ENCODE measurements at regions of chr1 and their contacts with region 1.

Region 1: GRCh38 chr1:229258031-229258756 is 12.7 kb upstream of the RAB4A start:
- DNase-seq: peak; percentile 74
- ATAC-seq: no peak
- H3K4me3 Mint-ChIP-seq: no peak overlapping the region
- H3K27ac Mint-ChIP-seq: no peak overlapping the region
- H3K4me1 Mint-ChIP-seq: peaks cover 32% of the 10 kb centered on the region
- H3K27me3 Mint-ChIP-seq: no peaks in the 10 kb centered on the region

Region 2: GRCh38 chr1:228691926-228692325 is 566.3 kb before region 1 on chr1:
- CTCF ChIA-PET with region 1: interaction called, 3 read pairs
- POLR2A ChIA-PET with region 1: no interaction called
- intact Hi-C with region 1: loop called in 1 of 2 experiments (anchors 1 kb)
- DNase-seq: peak; percentile 30
- ATAC-seq: no peak
- H3K4me3 Mint-ChIP-seq: no peak overlapping the region
- H3K27ac Mint-ChIP-seq: no peak overlapping the region
- H3K4me1 Mint-ChIP-seq: peaks cover 10% of the 10 kb centered on the region
- H3K27me3 Mint-ChIP-seq: no peaks in the 10 kb centered on the region

Region 3: DNA sequence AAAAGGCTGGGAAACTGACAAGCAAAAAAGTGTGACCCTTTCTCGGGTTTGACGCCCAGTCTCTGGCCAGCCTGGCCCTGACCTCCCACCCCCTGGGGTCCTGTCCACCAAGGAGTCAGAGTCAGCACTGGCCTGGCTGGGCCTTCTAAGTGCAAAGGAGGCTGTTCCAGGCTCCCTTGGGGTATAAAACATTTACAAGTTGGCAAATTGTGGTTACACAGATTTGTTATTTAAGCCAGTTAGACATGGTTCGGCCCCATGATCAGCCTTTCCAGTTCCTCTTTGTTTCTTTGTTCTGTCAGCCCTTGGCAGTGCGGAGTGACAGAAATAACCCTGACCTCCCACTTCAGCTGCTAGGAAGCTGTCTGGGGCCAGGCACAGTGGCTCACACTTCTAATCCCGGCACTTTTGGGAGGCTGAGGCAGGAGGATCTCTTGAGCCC is 148.9 kb before region 1 on chr1:
- CTCF ChIA-PET with region 1: no interaction called
- POLR2A ChIA-PET with region 1: no interaction called
- intact Hi-C with region 1: no loop called
- DNase-seq: no peak
- ATAC-seq: no peak
- H3K4me3 Mint-ChIP-seq: no peak overlapping the region
- H3K27ac Mint-ChIP-seq: no peak overlapping the region
- H3K4me1 Mint-ChIP-seq: peaks cover 7% of the 10 kb centered on the region
- H3K27me3 Mint-ChIP-seq: peaks cover 2% of the 10 kb centered on the region

Region 4: DNA sequence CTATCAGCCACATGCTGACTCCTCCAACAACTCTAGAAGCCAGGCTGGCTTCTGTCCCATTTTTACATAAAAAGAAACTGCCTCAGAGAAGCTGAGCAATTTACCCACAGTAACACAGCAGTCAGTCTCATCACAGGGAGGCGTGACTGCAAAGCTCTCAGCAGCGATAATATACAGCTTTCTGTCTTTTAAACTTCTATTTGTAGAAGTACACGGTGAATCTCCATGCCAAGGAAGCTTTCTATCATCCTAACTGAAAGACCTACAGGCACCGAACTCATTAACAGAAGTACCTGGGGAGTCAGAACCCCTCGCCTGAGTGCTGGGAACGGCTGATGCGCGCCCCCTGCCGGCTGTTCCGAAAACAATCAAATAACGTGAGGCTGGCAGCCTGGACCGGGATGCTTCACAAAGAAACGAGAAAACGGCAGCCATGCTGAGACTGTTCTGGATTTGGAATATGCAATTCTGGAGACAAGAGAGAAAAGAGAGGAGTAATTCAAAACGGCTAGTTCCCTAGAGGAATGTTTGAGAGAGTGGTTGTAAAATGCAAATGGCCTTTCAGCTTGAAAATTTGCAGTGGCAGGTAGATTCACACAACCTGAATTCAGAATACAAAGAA is 30.8 kb before region 1 on chr1:
- CTCF ChIA-PET with region 1: interaction called, 27 read pairs
- POLR2A ChIA-PET with region 1: no interaction called
- intact Hi-C with region 1: loop called in 1 of 2 experiments (anchors 2 kb)
- DNase-seq: peak; percentile 89
- ATAC-seq: peak; percentile 82
- H3K4me3 Mint-ChIP-seq: no peak overlapping the region
- H3K27ac Mint-ChIP-seq: no peak overlapping the region
- H3K4me1 Mint-ChIP-seq: peaks cover 21% of the 10 kb centered on the region
- H3K27me3 Mint-ChIP-seq: no peaks in the 10 kb centered on the region

Region 5: DNA sequence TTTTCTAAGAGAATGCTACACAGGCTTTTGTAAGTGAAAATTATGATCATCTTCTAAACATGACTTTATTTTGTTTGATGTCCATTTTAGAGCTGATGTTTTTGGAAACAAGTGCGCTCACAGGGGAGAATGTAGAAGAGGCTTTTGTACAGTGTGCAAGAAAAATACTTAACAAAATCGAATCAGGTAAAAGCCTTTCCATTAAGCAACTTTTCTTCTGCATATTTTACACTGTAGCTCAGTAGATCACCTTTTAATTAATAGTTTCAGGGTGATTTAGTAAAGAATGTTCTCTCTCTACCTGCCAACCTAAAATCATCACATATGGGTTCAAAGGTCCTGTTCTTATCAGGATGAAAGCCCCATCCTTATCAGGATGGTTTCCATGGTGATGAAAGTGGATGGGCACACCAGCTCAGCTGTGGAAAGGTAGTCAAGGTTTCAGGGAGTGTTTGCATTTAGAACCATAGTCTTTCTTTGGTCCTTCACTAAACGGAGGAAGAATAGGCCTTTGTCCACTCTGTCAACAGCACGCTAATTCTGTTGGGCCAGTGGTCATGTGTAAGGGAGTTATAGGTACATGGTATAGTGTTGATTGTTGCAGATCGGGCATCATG is 40.8 kb after region 1 on chr1:
- CTCF ChIA-PET with region 1: no interaction called
- POLR2A ChIA-PET with region 1: no interaction called
- intact Hi-C with region 1: no loop called
- DNase-seq: no peak
- ATAC-seq: no peak
- H3K4me3 Mint-ChIP-seq: no peak overlapping the region
- H3K27ac Mint-ChIP-seq: no peak overlapping the region
- H3K4me1 Mint-ChIP-seq: peaks cover 4% of the 10 kb centered on the region
- H3K27me3 Mint-ChIP-seq: no peaks in the 10 kb centered on the region

Region 6: GRCh38 chr1:229341774-229342655 is 83.8 kb after region 1 on chr1:
- CTCF ChIA-PET with region 1: interaction called, 4 read pairs
- POLR2A ChIA-PET with region 1: interaction called, 4 read pairs
- intact Hi-C with region 1: loop called (anchors 5 kb)
- DNase-seq: peak; percentile 85
- ATAC-seq: peak; percentile 76
- H3K4me3 Mint-ChIP-seq: peak overlapping the region; percentile 88
- H3K27ac Mint-ChIP-seq: peak overlapping the region; percentile 77
- H3K4me1 Mint-ChIP-seq: peaks cover 45% of the 10 kb centered on the region
- H3K27me3 Mint-ChIP-seq: peaks cover 9% of the 10 kb centered on the region

Region 7: GRCh38 chr1:229452956-229453801 is 195.0 kb after region 1 on chr1:
- CTCF ChIA-PET with region 1: interaction called, 6 read pairs
- POLR2A ChIA-PET with region 1: no interaction called
- intact Hi-C with region 1: loop called in 1 of 2 experiments (anchors 1 kb)
- DNase-seq: no peak
- ATAC-seq: no peak
- H3K4me3 Mint-ChIP-seq: no peak overlapping the region
- H3K27ac Mint-ChIP-seq: no peak overlapping the region
- H3K4me1 Mint-ChIP-seq: no peaks in the 10 kb centered on the region
- H3K27me3 Mint-ChIP-seq: no peaks in the 10 kb centered on the region

Region 8: DNA sequence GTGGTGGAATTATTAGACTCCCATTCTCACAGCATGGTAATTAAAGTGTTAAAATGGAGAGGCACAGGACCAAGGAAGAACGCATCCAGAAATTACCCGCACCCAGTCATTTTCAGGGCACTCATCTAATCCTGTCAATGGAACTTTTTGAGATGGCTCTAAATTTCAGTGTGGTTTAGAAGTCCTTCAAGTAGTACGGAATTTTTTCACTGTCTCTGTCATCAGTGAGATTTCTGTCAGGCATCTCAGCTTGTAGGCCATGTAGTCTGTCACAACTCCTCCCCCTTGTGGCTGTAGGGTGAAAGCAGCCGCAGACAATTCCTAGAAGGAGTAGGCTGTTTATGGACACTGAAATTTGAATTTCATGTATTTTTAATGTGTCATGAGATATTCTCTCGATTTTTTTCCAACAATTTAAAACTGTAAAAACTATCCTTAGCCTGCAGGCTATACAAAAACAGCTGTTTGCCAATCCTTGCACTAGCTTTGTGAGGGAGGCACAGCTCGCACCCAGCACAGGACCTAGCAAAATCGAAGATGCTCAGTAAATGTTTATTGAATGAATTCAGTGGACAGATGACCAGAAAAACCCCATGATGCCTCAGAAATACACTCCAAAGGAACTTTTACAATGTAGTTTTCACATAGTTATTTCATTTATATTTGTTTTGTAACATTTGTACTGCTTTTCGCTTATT is 256.5 kb after region 1 on chr1:
- CTCF ChIA-PET with region 1: interaction called, 6 read pairs
- POLR2A ChIA-PET with region 1: no interaction called
- intact Hi-C with region 1: loop called in 1 of 2 experiments (anchors 1 kb)
- DNase-seq: peak; percentile 70
- ATAC-seq: peak; percentile 87
- H3K4me3 Mint-ChIP-seq: no peak overlapping the region
- H3K27ac Mint-ChIP-seq: no peak overlapping the region
- H3K4me1 Mint-ChIP-seq: peaks cover 6% of the 10 kb centered on the region
- H3K27me3 Mint-ChIP-seq: no peaks in the 10 kb centered on the region

Region 9: GRCh38 chr1:229579059-229579673 is 321.0 kb after region 1 on chr1:
- CTCF ChIA-PET with region 1: no interaction called
- POLR2A ChIA-PET with region 1: no interaction called
- intact Hi-C with region 1: no loop called
- DNase-seq: no peak
- ATAC-seq: no peak
- H3K4me3 Mint-ChIP-seq: no peak overlapping the region
- H3K27ac Mint-ChIP-seq: no peak overlapping the region
- H3K4me1 Mint-ChIP-seq: no peaks in the 10 kb centered on the region
- H3K27me3 Mint-ChIP-seq: peaks cover 5% of the 10 kb centered on the region

Region 10: GRCh38 chr1:230310381-230311163 is 1052.4 kb after region 1 on chr1:
- CTCF ChIA-PET with region 1: no interaction called
- POLR2A ChIA-PET with region 1: no interaction called
- intact Hi-C with region 1: loop called (anchors 1 to 5 kb)
- DNase-seq: peak; percentile 82
- ATAC-seq: peak; percentile 48
- H3K4me3 Mint-ChIP-seq: no peak overlapping the region
- H3K27ac Mint-ChIP-seq: no peak overlapping the region
- H3K4me1 Mint-ChIP-seq: peaks cover 15% of the 10 kb centered on the region
- H3K27me3 Mint-ChIP-seq: peaks cover 4% of the 10 kb centered on the region

Measured in activated CD4-positive, alpha-beta T cell treated with anti-CD3 and anti-CD28 coated beads for 36 hours (primary cell).